Esophagus muscularis mucosa (tissue), 4 donors: ENCODE measurements at regions of chr2 and their contacts with region 1.

Region 1: DNA sequence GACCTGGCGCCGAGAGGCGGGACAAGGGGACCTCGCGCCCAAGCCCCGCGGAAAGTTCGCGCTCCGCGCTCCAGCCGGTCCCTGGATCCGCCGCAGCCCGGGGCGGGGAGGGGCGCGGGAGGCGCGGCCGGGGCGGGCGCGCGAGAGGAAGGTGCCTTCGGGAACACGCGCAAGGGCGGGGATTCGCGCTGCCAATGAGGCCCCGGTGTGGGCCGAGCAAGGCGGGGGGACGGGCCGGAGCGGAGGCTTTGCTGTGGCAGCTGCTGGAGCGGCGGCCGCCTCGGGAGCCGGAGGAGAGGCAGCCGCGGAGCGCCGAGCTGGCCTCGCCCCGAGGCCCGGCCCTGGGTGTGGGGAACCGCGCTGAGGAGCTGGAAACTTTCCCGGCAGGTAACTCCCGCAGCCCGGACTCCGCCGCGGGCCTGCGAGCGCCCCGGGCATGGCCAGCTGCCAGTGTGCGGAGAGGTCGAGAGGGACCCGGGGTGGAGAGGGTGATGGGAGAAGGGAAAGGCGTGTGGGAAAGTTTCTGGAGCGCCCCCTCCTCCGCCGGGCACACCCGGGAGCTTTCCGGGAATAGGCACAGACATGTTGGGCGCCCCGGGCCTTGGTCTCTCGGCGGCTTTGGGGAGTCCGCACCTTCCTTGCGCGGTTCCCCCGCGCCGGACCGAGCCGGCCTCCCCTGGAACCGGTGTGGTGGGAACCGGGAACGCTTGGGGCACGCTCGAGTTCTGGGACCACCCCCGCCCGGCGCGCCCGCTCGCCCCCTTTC is at the start of gene TANC1:
- DNase-seq: no peak
- H3K4me3 ChIP-seq: peak within 1 kb of the TSS; percentile 79 to 91 (median 88)
- H3K27ac ChIP-seq: peak within 1 kb of the TSS; percentile 88 to 95 (median 94)
- H3K4me1 ChIP-seq: peaks cover 37 to 54% (median 43%) of the 10 kb centered on the region in 4 donors
- H3K27me3 ChIP-seq: no peaks in the 10 kb centered on the region
- CTCF ChIP-seq: no peak
- EP300 ChIP-seq: no peak
- POLR2A ChIP-seq: peak; percentile 77
- total RNA-seq, gene TANC1: 34.3 to 54.0 (median 52.9) TPM

Region 2: DNA sequence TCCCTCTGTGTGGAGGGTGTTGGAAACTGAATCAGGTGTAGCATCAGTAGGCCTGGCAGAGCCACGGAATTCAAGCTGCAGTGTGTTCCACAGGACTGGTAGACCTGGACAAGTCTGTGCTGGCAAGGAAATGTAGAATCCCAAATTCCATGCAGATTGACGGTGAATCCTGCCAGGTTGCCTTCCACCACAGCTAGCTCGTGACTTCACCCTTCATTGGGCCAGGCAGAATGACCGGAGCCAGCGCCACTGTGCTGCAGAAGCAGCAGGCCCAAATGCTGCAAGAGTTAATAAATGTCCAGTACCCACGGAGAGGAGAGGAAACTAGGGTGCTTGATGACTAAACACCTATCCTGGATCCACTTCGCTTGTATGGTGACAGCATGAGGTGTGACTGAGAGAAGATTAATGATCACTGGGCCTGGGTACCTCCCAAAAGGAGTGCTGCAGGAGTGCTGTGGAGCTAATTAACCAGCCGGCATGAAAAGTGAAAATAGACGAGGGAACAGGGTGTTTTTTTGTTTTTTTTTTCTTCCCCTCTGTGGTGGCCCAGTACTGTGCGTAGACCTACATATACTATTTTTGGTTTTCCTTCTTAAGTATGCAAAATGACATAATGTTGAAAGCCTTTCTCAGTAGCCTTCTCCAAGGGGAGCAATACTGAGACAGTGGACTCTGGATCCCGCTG is 122.1 kb after region 1 on chr2:
- intact Hi-C with region 1: no loop called
- DNase-seq: no peak
- H3K4me3 ChIP-seq: no peak overlapping the region
- H3K27ac ChIP-seq: peak overlapping the region; percentile 76 to 79 (median 78)
- H3K4me1 ChIP-seq: peaks cover 90 to 96% (median 95%) of the 10 kb centered on the region in 4 donors
- H3K27me3 ChIP-seq: no peaks in the 10 kb centered on the region
- CTCF ChIP-seq: no peak
- EP300 ChIP-seq: no peak
- POLR2A ChIP-seq: no peak

Region 3: DNA sequence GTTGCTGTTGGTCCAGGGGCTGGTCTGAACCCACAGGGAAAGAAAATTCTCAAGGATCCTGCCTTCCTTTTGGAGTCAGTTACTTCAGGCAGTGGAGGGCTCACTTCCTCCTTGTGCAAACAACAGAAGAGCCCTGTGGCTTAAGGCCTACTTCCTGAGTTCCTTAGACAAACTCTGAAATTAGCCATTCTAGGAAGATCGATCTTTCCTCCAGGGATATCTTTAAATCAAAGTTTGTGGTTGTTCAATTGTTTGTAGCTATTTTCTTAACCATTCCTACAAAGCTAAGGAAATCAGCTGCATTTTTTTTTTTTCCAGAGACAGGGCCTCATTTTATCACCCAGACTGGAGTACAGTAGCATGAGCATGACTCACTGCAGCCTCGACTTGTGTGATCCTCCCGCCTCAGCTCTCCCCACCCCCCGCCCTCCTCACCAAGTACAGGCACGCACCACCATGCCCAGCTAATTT is 155.9 kb after region 1 on chr2:
- intact Hi-C with region 1: loop called (anchors 5 kb)
- DNase-seq: no peak
- H3K4me3 ChIP-seq: no peak overlapping the region
- H3K27ac ChIP-seq: peak overlapping the region in 3 of 4 donors; percentile 30 to 61 (median 49)
- H3K4me1 ChIP-seq: peaks cover 47 to 68% (median 58%) of the 10 kb centered on the region in 4 donors
- H3K27me3 ChIP-seq: no peaks in the 10 kb centered on the region
- CTCF ChIP-seq: no peak
- EP300 ChIP-seq: no peak
- POLR2A ChIP-seq: no peak

Region 4: GRCh38 chr2:159456491-159457426 is 488.2 kb after region 1 on chr2:
- intact Hi-C with region 1: no loop called
- DNase-seq: no peak
- H3K4me3 ChIP-seq: no peak overlapping the region
- H3K27ac ChIP-seq: peak overlapping the region in 2 of 4 donors; percentile 3 to 40
- H3K4me1 ChIP-seq: peaks cover 32 to 49% (median 35%) of the 10 kb centered on the region in 4 donors
- H3K27me3 ChIP-seq: no peaks in the 10 kb centered on the region
- CTCF ChIP-seq: no peak
- EP300 ChIP-seq: no peak
- POLR2A ChIP-seq: no peak